ENCODE measurements at regions of chr21 and their contacts with region 1.

Region 1: DNA sequence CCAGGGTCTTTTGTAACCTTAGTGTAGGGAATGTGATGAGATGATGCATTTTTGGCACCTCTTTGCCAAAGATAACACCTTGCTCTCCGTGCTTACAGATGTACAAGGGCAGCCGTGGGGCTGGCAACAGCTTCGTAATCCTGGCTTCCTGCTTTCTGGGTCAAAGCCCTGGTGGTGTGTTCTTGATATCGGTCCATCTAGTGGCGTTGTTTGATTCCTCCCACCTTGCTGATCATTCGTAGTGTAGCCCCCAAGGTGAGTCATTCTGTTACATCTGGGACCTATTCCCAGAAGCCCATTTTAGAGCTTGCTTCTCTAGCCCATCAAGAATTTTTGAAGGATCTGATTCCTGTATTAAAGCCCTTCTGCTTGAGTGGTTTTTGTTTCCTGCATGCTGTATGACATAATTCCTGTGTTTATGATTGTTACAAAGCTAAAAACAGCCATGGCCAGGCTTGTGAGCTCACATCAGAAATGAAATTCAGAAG is 7.0 kb upstream of the CCT8 start:
- DNase-seq: peak; percentile 31 to 71 (median 54)
- H3K4me3 ChIP-seq: no peak overlapping the region
- H3K27ac ChIP-seq: peak overlapping the region in 4 of 5 donors; percentile 1 to 72 (median 58)
- H3K4me1 ChIP-seq: peaks cover 11 to 31% of the 10 kb centered on the region in 2 donors
- H3K27me3 ChIP-seq: no peaks in the 10 kb centered on the region
- CTCF ChIP-seq: no peak
- POLR2A ChIP-seq: no peak

Region 2: GRCh38 chr21:29164325-29164942 is 83.9 kb after region 1 on chr21:
- intact Hi-C with region 1: no loop called
- DNase-seq: peak in 2 of 7 donors; percentile 24 to 31
- H3K4me3 ChIP-seq: peak overlapping the region in 1 of 4 donors; percentile 30
- H3K27ac ChIP-seq: no peak overlapping the region
- H3K4me1 ChIP-seq: peaks cover 0 to 8% of the 10 kb centered on the region in 2 donors
- H3K27me3 ChIP-seq: no peaks in the 10 kb centered on the region
- CTCF ChIP-seq: peak; percentile 43 to 90 (median 81)
- POLR2A ChIP-seq: no peak

Region 3: DNA sequence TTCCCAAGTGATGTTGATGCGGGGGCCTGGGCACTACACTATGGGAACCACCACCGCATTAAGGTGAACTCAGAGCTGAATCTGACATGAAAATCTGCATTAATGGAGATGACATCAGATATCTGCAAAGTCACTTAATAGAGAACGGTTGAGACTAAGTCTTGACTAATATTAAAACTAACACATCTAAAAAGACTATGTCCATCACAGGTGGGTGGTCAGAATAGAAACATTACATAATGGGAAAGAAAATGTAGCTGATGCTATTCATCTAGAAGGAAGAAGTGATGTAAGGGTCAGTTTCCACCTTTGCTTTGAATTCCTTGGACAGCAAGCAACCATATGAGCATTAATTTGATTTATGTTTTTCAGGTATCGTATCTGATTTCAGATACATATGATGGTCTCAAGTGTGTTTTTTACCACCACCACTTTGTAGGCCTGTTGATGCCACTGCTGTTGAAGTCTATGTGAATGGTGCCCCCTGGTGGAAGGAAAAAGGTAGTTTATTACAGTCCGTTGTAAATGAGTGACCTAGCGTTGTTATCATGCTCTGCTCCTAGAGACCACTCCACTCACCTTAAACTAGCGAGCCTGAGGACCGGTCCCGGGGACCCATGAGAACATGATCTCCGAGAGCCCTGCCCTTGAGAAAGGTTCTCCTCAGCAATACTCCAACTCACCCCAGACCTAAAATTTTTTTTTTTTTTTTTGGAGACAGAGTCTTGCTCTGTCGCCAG is 291.7 kb after region 1 on chr21:
- intact Hi-C with region 1: loop called (anchors 5 to 10 kb)
- DNase-seq: peak; percentile 25 to 76 (median 70)
- H3K4me3 ChIP-seq: no peak overlapping the region
- H3K27ac ChIP-seq: no peak overlapping the region
- H3K4me1 ChIP-seq: no peaks in the 10 kb centered on the region
- H3K27me3 ChIP-seq: no peaks in the 10 kb centered on the region
- CTCF ChIP-seq: peak; percentile 71 to 89 (median 83)
- POLR2A ChIP-seq: no peak

Measured in adrenal gland (tissue), 19 donors.